Activated T-helper 2 cell treated with anti-CD3 and anti-CD28 coated beads, Interferon-gamma antibody, Interleukin-2, Interleukin-4, amounts not matched to agents 10 μg/mL and 5 μg/mL and 100 μg/mL, durations not matched to agents 14 hours and 24 hours and 36 hours (primary cell): ENCODE measurements at regions of chr16 and their contacts with region 1.

Region 1: DNA sequence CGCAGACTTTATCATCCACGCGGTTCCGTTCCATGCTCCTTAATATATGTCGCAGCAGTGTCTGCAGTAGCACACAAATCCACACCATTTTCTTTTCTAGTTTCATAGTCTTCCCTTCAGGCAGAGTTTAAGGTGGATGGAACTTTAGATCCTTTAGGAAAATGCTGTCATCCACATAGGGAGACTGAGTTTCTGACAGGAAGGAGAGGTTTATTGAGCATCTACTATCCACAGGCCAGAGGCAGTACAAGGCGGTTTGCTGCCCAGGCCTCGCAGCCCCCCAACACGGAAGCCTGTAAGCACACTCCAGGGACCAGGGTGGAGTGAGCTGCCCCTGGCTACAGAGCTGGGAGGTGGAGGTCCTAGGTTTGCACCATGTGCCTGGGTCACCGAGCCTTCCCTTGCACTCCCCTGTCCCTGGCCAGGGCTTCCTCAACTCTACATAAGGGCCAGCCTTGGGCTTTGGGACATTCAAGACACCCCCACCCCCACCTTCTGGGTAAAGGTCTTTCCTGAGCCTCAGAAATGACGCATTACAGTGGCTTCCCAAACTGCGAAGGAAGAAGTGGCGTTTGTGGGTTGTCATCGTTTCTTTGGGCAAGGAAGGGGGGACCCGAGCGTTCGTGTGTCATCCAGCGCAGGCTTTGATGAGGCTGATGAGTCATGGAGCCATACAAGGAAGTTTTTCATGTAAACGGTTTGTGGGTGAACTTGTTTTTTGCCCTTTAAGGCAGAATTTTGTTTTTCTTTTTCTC is 146.5 kb upstream of the PLCG2 start:
- DNase-seq: peak; percentile 69
- H3K4me3 Mint-ChIP-seq: peak overlapping the region; percentile 68
- H3K27ac Mint-ChIP-seq: peak overlapping the region; percentile 100
- H3K4me1 Mint-ChIP-seq: peaks cover 72% of the 10 kb centered on the region
- H3K27me3 Mint-ChIP-seq: no peaks in the 10 kb centered on the region

Region 2: GRCh38 chr16:81444448-81445121 is 188.0 kb before region 1 on chr16 and contains the start of gene CMIP:
- intact Hi-C with region 1: loop called (anchors 2 kb)
- DNase-seq: peak; percentile 77
- H3K4me3 Mint-ChIP-seq: peak within 1 kb of the TSS; percentile 90
- H3K27ac Mint-ChIP-seq: peak within 1 kb of the TSS; percentile 83
- H3K4me1 Mint-ChIP-seq: peaks cover 38% of the 10 kb centered on the region
- H3K27me3 Mint-ChIP-seq: peaks cover 29% of the 10 kb centered on the region
- total RNA-seq, gene CMIP: 68.0 and 76.9 TPM in 2 replicates

Region 3: GRCh38 chr16:81688182-81688581 is 55.6 kb after region 1 on chr16:
- intact Hi-C with region 1: loop called (anchors 2 kb)
- DNase-seq: no peak
- H3K4me3 Mint-ChIP-seq: no peak overlapping the region
- H3K27ac Mint-ChIP-seq: peak overlapping the region; percentile 38
- H3K4me1 Mint-ChIP-seq: peaks cover 18% of the 10 kb centered on the region
- H3K27me3 Mint-ChIP-seq: no peaks in the 10 kb centered on the region

Region 4: DNA sequence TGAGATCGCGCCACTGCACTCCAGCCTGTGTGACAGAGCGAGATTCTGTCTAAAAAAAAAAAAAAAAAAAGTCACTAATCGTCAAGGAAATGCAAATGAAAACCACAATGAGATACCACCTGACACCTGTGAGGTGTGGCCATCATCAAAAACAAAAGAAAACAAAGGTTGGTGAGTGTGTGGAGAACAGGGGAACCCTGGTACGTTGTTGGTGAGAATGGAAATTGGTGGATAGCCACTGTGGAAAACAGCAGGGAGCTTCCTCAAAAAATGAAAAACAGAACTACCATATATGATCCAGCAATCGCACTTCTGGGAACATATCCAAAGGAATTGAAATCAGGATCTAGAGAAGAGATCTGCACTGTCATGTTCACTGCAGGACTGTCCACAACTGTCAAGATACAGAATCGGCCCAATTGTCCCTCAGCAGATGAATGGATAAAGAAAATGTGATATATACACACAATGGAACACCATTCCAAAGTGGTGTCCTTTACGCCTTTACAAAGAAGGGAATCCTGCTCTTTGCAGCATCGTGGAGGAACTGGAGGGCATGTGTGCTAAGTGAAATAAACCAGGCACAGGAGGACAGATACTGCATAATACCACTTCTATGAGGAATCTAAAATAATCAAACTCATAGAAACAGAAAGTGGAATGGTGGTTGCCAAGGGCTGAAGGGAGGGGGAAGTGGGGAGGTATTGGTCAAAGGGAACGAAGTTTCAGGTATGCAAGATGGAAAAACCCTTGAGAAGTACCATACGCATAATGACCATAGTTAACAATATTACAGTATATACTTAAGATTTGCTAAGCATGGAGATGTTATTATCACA is 83.0 kb after region 1 on chr16:
- intact Hi-C with region 1: loop called (anchors 5 kb)
- DNase-seq: no peak
- H3K4me3 Mint-ChIP-seq: peak overlapping the region; percentile 5
- H3K27ac Mint-ChIP-seq: peak overlapping the region; percentile 34
- H3K4me1 Mint-ChIP-seq: peaks cover 35% of the 10 kb centered on the region
- H3K27me3 Mint-ChIP-seq: no peaks in the 10 kb centered on the region